HEK293 (cell line): ENCODE measurements at regions of chr1 and their contacts with region 1.

Region 1: GRCh38 chr1:154479764-154480421 is 22.1 kb upstream of the TDRD10 start:
- H3K4me3 ChIP-seq: no peak overlapping the region
- H3K27ac ChIP-seq: no peak overlapping the region
- H3K4me1 ChIP-seq: peaks cover 3% of the 10 kb centered on the region; the same call in 1 of the 2 replicates
- CTCF ChIP-seq: peak; percentile 64; the same call in 1 of the 2 replicates

Region 2: GRCh38 chr1:154404984-154405761 is 74.7 kb before region 1 on chr1 and contains the start of gene IL6R:
- CTCF ChIA-PET with region 1: interaction called, 17 read pairs
- POLR2A ChIA-PET with region 1: no interaction called
- H3K4me3 ChIP-seq: peak within 1 kb of the TSS; percentile 53
- H3K27ac ChIP-seq: peak within 1 kb of the TSS; percentile 48; the same call in 1 of the 2 replicates
- H3K4me1 ChIP-seq: peaks cover 2% of the 10 kb centered on the region; the same call in 1 of the 2 replicates
- CTCF ChIP-seq: peak; percentile 98

Region 3: GRCh38 chr1:154533952-154534844 is 54.3 kb after region 1 on chr1:
- CTCF ChIA-PET with region 1: interaction called, 59 read pairs
- POLR2A ChIA-PET with region 1: no interaction called
- H3K4me3 ChIP-seq: no peak overlapping the region
- H3K27ac ChIP-seq: no peak overlapping the region
- H3K4me1 ChIP-seq: no peaks in the 10 kb centered on the region
- CTCF ChIP-seq: peak; percentile 36; the same call in 1 of the 2 replicates

Region 4: DNA sequence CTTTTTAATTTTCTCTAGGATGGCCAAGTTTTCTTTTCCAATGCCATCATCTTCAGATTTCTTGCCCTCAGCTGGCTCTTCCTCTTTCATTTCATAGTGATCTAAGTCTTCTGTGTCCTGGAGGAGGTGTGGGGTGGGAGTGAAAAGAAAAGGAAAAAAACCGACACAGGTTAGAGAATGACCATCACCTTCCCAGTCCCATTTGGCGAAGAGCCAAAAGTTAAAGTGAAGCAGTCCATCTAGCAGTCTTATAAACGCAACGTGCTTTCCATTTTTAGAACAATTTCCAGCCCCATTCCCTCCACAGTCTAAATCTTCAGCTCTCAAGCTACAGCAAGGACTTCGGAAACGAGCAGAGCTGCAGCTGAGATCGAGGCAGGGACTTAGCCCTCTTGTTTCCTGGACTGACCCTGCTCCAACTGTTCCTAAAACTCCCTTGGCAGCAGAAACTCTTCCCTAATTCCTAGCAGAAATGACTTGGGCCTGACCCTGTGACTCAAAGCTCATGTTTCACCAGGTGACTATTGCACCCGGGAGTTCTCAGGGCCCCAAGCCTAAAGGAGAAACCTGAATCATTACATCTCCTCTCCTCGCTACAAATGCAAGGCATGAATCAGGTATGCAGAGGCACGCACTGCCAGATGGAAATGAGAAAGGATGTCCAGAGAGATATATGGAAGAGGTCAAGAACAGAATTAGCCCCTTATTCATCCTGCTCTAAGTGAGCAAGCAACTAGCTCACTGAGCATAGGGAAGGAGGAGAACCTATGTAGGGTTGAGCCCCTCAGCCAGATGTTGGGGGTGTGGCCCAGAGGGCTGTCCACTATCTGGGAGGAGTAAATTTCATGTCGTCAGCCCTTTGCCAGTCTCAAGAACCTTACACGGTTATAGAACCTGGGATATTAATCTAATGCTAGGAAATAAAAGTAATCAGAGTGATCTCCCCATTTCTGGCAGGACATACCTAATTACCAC is 73.5 kb after region 1 on chr1:
- CTCF ChIA-PET with region 1: interaction called, 205 read pairs
- POLR2A ChIA-PET with region 1: interaction called, 3 read pairs
- H3K4me3 ChIP-seq: no peak overlapping the region
- H3K27ac ChIP-seq: no peak overlapping the region
- H3K4me1 ChIP-seq: no peaks in the 10 kb centered on the region
- CTCF ChIP-seq: no peak